ENCODE measurements at regions of chr13 and their contacts with region 1.

Region 1: GRCh38 chr13:48400850-48401291 is 12.0 kb downstream of the LPAR6 start:
- DNase-seq: no peak
- H3K4me3 Mint-ChIP-seq: no peak overlapping the region
- H3K27ac Mint-ChIP-seq: peak overlapping the region; percentile 11
- H3K4me1 Mint-ChIP-seq: peaks cover 66% of the 10 kb centered on the region
- H3K27me3 Mint-ChIP-seq: no peaks in the 10 kb centered on the region

Region 2: GRCh38 chr13:47508527-47509228 is 892.2 kb before region 1 on chr13:
- CTCF ChIA-PET with region 1: no interaction called
- POLR2A ChIA-PET with region 1: no interaction called
- intact Hi-C with region 1: no loop called
- DNase-seq: no peak
- H3K4me3 Mint-ChIP-seq: no peak overlapping the region
- H3K27ac Mint-ChIP-seq: no peak overlapping the region
- H3K4me1 Mint-ChIP-seq: no peaks in the 10 kb centered on the region
- H3K27me3 Mint-ChIP-seq: no peaks in the 10 kb centered on the region

Region 3: DNA sequence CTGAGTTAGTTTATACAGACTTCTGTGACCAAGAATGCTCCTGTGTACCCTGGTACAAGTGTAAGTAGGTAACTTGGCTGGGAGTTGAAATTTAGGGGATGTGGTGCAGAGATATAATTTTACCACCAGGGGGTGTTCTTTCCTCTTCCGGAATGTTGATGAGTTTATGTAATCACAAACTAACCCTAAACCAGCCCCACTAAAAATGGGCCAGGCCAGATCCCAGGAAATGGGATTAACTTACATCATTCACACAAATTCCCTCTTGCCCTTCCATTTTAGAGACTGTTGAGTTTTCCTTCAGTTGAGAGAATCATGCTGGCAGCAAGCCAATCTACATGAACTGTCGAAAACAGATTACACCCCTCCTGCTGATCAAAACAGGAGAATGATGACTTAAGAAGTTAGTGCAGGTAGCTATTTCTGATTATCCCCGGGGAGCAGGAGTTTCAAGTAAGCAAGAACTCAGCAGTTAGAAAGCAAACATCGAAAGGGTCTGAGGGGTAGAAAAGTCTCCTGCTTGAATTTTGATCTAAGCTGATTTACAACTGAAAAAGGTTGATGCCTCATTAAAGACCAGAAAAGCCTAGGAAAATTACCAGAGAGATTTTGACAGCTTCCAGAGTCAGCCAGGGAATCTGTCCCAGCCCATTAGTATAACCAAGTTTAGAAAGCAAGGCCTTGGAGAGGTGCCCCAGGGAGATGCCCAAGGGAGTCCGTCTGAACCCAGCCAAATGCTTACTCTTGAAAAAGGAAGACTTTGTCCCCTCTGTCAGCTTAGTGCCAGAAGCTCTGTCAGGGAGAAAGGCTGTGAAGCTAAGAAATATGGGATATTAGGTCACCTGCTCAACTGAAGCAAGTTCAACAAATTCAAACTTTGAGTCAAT is 273.7 kb before region 1 on chr13:
- CTCF ChIA-PET with region 1: no interaction called
- POLR2A ChIA-PET with region 1: no interaction called
- intact Hi-C with region 1: loop called (anchors 5 kb)
- DNase-seq: peak; percentile 26
- H3K4me3 Mint-ChIP-seq: peak overlapping the region; percentile 10
- H3K27ac Mint-ChIP-seq: no peak overlapping the region
- H3K4me1 Mint-ChIP-seq: peaks cover 22% of the 10 kb centered on the region
- H3K27me3 Mint-ChIP-seq: peaks cover 3% of the 10 kb centered on the region

Region 4: GRCh38 chr13:48222358-48223301 is 178.2 kb before region 1 on chr13:
- CTCF ChIA-PET with region 1: no interaction called
- POLR2A ChIA-PET with region 1: no interaction called
- intact Hi-C with region 1: loop called (anchors 2 kb)
- DNase-seq: peak; percentile 30
- H3K4me3 Mint-ChIP-seq: peak overlapping the region; percentile 35
- H3K27ac Mint-ChIP-seq: no peak overlapping the region
- H3K4me1 Mint-ChIP-seq: peaks cover 51% of the 10 kb centered on the region
- H3K27me3 Mint-ChIP-seq: no peaks in the 10 kb centered on the region

Region 5: DNA sequence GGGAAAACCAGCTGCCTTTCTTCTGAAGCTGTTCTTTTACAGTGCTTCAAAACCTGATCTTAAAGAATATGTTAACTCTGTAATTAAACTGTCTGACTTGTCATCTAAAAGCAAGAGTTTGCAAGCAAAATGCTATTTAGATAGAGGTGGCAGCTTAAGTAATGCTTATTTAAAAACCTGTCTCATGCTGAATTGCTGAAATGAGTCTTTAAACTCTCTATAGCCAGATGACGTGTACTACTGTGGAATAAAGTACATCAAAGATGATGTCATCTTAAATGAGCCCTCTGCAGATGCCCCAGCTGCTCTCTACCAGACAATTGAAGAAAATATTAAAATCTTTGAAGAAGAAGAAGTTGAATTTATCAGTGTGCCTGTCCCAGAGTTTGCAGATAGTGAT is 144.9 kb before region 1 on chr13:
- CTCF ChIA-PET with region 1: no interaction called
- POLR2A ChIA-PET with region 1: no interaction called
- intact Hi-C with region 1: no loop called
- DNase-seq: no peak
- H3K4me3 Mint-ChIP-seq: no peak overlapping the region
- H3K27ac Mint-ChIP-seq: no peak overlapping the region
- H3K4me1 Mint-ChIP-seq: peaks cover 50% of the 10 kb centered on the region
- H3K27me3 Mint-ChIP-seq: no peaks in the 10 kb centered on the region

Region 6: DNA sequence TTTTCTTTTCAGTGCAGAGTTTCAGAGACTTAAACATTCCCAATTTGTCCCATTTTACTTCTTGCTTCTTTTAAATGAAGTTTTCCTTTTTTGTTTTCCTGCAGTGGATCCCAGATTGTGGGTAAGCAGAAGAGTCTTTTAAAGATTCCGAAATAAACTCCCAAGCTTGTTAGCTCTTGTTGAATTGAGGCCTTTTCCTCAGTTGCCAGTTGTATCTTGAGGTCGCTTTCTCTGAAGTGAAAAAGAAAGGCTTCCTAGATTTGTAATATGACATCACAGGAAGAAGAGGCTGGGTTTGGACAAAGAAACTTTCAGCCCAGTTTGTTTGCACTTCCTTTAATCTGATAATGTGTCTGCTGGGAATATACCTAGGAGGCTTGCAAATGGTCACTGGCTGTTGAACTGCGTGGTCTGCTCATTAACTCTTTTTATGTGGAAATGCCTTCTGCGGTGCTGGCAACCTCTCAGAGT is 12.0 kb after region 1 on chr13 and contains the start of gene LPAR6:
- CTCF ChIA-PET with region 1: no interaction called
- POLR2A ChIA-PET with region 1: interaction called, 5 read pairs
- intact Hi-C with region 1: loop called (anchors 1 kb)
- DNase-seq: peak; percentile 23
- H3K4me3 Mint-ChIP-seq: peak within 1 kb of the TSS; percentile 94
- H3K27ac Mint-ChIP-seq: peak within 1 kb of the TSS; percentile 97
- H3K4me1 Mint-ChIP-seq: peaks cover 41% of the 10 kb centered on the region
- H3K27me3 Mint-ChIP-seq: no peaks in the 10 kb centered on the region
- total RNA-seq, gene LPAR6: 8.8 TPM

Region 7: DNA sequence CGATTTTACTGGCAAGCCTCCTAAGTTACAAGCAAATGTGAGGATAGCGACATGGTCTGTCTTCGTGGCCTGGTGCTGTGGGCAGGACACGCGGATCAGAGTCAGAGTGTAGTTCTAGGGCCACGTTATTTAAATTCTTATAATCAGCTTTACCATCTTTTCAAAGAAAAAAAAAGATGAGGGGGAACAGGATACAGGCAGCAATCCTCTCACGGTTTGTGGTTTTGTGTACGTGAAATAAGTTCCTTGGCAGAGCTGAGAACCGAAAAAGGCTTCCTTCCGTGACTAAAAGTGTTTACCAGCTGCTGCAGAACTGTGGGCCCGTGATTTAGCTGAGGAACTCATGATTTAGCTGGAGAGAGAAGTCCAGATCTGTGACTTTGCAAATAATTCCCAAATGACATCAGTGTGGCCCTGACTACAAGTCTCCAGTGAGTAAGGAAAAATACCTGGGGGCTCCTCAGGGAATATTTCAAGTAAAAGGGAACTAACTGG is 104.8 kb after region 1 on chr13:
- CTCF ChIA-PET with region 1: no interaction called
- POLR2A ChIA-PET with region 1: no interaction called
- intact Hi-C with region 1: loop called (anchors 1 kb)
- DNase-seq: peak; percentile 61
- H3K4me3 Mint-ChIP-seq: peak overlapping the region; percentile 39
- H3K27ac Mint-ChIP-seq: peak overlapping the region; percentile 68
- H3K4me1 Mint-ChIP-seq: peaks cover 55% of the 10 kb centered on the region
- H3K27me3 Mint-ChIP-seq: no peaks in the 10 kb centered on the region

Region 8: GRCh38 chr13:48562296-48563066 is 161.6 kb after region 1 on chr13:
- CTCF ChIA-PET with region 1: no interaction called
- POLR2A ChIA-PET with region 1: no interaction called
- intact Hi-C with region 1: loop called (anchors 1 kb)
- DNase-seq: peak; percentile 79
- H3K4me3 Mint-ChIP-seq: peak overlapping the region; percentile 31
- H3K27ac Mint-ChIP-seq: peak overlapping the region; percentile 58
- H3K4me1 Mint-ChIP-seq: peaks cover 43% of the 10 kb centered on the region
- H3K27me3 Mint-ChIP-seq: peaks cover 52% of the 10 kb centered on the region

Region 9: DNA sequence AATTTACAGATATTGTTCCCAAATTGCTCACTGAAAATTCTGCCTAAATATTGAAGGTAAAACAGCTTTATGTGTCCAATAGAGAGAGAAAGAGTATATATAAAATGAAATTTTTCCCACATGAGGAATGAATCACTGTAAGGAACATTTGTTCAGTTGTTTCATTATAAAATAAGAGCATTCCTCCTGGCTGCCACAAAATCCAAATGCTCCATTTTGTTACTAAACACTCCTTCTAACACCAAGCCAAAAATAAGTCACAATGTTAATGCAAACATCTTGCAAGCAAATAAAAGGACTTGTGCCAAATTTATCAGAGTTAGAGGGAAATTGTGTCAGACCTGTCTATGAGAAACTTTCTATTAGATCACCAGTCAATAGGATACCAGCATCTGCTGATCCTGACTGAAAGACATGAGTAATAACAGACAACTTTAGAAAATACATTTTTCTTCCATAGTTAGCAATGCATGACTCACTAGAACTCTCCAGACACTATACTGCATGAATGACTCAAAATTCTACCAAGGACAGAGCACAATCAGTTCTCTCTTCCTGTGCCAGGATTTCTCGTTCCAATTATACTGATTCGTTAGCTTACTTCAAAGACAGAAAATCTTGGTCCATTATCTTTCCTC is 491.3 kb after region 1 on chr13:
- CTCF ChIA-PET with region 1: no interaction called
- POLR2A ChIA-PET with region 1: no interaction called
- intact Hi-C with region 1: loop called (anchors 5 kb)
- DNase-seq: no peak
- H3K4me3 Mint-ChIP-seq: no peak overlapping the region
- H3K27ac Mint-ChIP-seq: peak overlapping the region; percentile 49
- H3K4me1 Mint-ChIP-seq: peaks cover 36% of the 10 kb centered on the region
- H3K27me3 Mint-ChIP-seq: peaks cover 3% of the 10 kb centered on the region

Measured in activated CD4-positive, alpha-beta memory T cell treated with anti-CD3 and anti-CD28 coated beads for 36 hours (primary cell).